ENCODE measurements at regions of chr17 and their contacts with region 1.

Region 1: DNA sequence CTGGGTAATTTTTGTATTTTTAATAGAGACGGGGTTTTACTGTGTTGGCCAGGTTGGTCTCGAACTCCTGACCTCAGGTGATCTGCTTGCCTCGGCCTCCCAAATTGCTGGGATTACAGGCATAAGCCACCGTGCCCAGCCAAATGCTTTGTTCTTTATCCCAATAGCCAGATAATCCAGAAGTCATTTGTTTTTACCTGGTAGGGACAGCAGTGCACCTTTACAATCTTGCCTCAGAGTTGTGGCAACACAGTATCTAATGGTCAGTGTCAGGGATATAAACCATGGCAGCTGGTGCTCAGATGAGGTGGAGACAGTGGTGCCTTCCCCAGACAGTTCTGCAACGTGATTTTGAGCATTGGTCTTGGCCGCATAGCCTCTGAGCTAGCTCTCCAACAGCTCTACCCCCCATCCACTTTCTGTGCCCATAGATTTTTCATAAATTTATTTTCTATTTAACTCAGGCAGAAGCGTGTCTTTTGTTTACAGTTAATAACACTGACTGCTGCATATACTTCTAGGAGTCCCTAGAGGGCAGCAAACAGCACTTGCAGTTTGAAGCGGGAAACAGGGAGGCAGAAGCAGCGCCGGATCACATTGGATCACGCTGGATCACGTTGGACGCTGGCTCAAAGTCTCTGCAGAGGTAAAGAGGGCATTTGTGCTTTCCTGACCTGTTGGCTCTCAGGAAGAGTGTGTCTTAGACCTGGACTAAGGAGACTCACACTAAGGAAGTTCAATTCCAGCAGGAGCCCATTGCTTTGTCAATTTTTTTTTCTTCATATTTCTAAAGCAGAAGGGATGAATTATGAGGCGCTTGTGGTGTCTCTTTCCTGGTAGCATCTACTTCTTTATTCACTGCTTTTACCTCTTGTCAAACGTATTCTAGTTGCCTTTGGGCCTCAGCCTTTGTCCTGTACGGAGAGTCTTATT is 5.1 kb upstream of the GGT6 start:
- DNase-seq: peak in 1 of 2 donors; percentile 82
- ATAC-seq: peak; percentile 73 to 94 (median 84)
- H3K4me3 ChIP-seq: no peak overlapping the region
- H3K4me3 Mint-ChIP-seq: peak overlapping the region; percentile 13
- H3K27ac ChIP-seq: no peak overlapping the region
- H3K27ac Mint-ChIP-seq: no peak overlapping the region
- H3K4me1 ChIP-seq: peaks cover 5% of the 10 kb centered on the region
- H3K4me1 Mint-ChIP-seq: peaks cover 10 to 20% of the 10 kb centered on the region in 2 donors
- H3K27me3 ChIP-seq: no peaks in the 10 kb centered on the region
- H3K27me3 Mint-ChIP-seq: peaks cover 0 to 7% of the 10 kb centered on the region in 2 donors
- CTCF ChIP-seq: peak; percentile 87

Region 2: GRCh38 chr17:4554997-4555799 is 10.3 kb before region 1 on chr17 and contains the start of gene MYBBP1A:
- intact Hi-C with region 1: loop called (anchors 1 kb)
- DNase-seq: peak; percentile 96 to 99
- ATAC-seq: peak; percentile 95 to 97 (median 97)
- H3K4me3 ChIP-seq: peak within 1 kb of the TSS; percentile 68
- H3K4me3 Mint-ChIP-seq: peak within 1 kb of the TSS; percentile 96
- H3K27ac ChIP-seq: peak within 1 kb of the TSS; percentile 81
- H3K27ac Mint-ChIP-seq: peak within 1 kb of the TSS; percentile 97
- H3K4me1 ChIP-seq: peaks cover 21% of the 10 kb centered on the region
- H3K4me1 Mint-ChIP-seq: peaks cover 14 to 29% of the 10 kb centered on the region in 2 donors
- H3K27me3 ChIP-seq: no peaks in the 10 kb centered on the region
- H3K27me3 Mint-ChIP-seq: no peaks in the 10 kb centered on the region
- CTCF ChIP-seq: no peak
- total RNA-seq, gene MYBBP1A: 50.5 to 58.1 (median 52.7) TPM

Measured in natural killer cell (primary cell).